ENCODE measurements at regions of chr6 and their contacts with region 1.

Region 1: GRCh38 chr6:3281631-3282475 is 23.1 kb downstream of the PSMG4 start:
- DNase-seq: peak; percentile 25 to 63
- H3K4me3 ChIP-seq: no peak overlapping the region
- H3K27ac ChIP-seq: peak overlapping the region in 1 of 2 donors; percentile 25
- H3K4me1 ChIP-seq: peaks cover 0 to 23% (median 10%) of the 10 kb centered on the region in 4 donors
- H3K27me3 ChIP-seq: no peaks in the 10 kb centered on the region
- CTCF ChIP-seq: no peak

Region 2: GRCh38 chr6:3456755-3457466 is 175.1 kb after region 1 on chr6 and contains the start of gene SLC22A23:
- intact Hi-C with region 1: loop called (anchors 10 kb)
- DNase-seq: peak; percentile 34 to 76
- H3K4me3 ChIP-seq: peak within 1 kb of the TSS; percentile 57 to 71
- H3K27ac ChIP-seq: peak within 1 kb of the TSS; percentile 9 to 53
- H3K4me1 ChIP-seq: peaks cover 0 to 35% (median 22%) of the 10 kb centered on the region in 4 donors
- H3K27me3 ChIP-seq: no peaks in the 10 kb centered on the region
- CTCF ChIP-seq: peak; percentile 56 to 82

Region 3: DNA sequence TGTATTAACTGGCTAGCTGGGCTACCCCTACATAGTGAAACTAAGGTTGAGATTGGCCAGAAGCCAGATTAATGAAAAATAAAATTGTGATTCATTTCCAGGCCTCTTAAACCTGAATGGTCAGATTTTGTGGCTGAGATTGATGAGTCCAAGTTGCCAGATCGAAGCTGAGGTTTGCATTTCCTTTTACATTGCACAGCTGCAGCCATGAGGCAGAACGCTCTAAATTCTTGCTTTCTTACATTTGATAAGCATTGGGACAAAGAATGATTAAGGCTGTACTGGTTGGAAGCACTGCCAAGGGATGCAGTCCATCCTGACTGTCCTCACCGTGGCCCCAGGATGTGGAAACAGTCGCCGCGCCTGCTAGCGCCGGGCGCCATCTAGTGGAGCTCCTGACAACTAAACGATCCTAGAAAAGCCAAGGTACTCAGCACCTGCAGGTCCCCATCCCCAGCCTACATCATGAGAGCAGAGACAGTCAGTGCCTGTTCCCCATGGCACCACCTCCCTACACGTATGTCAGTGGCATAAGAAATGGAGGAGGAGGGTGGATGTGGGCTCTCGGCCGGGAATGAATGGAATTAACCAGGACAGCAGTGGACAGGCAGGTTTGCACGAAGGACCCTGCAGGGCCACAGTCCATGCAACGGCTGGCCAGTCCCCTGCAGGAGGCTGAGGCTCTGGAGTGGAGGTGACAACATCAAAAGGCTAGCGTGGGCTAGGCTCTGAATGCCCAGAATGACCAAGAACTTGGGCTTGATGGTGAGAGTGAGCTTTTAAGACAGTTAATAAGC is 450.7 kb after region 1 on chr6:
- intact Hi-C with region 1: loop called (anchors 2 kb)
- DNase-seq: peak; percentile 73 to 86
- H3K4me3 ChIP-seq: peak overlapping the region in 1 of 2 donors; percentile 3
- H3K27ac ChIP-seq: peak overlapping the region; percentile 62 to 75
- H3K4me1 ChIP-seq: peaks cover 0 to 100% (median 68%) of the 10 kb centered on the region in 4 donors
- H3K27me3 ChIP-seq: no peaks in the 10 kb centered on the region
- CTCF ChIP-seq: peak; percentile 86 to 87

Region 4: GRCh38 chr6:3887150-3887700 is 605.4 kb after region 1 on chr6:
- intact Hi-C with region 1: loop called (anchors 10 kb)
- DNase-seq: peak in 1 of 2 donors; percentile 53
- H3K4me3 ChIP-seq: no peak overlapping the region
- H3K27ac ChIP-seq: peak overlapping the region in 1 of 2 donors; percentile 52
- H3K4me1 ChIP-seq: peaks cover 0 to 58% (median 18%) of the 10 kb centered on the region in 4 donors
- H3K27me3 ChIP-seq: no peaks in the 10 kb centered on the region
- CTCF ChIP-seq: peak; percentile 50 to 52

Region 5: GRCh38 chr6:3990692-3991501 is 709.0 kb after region 1 on chr6:
- intact Hi-C with region 1: loop called (anchors 10 kb)
- DNase-seq: peak; percentile 89 to 94
- H3K4me3 ChIP-seq: peak overlapping the region; percentile 54 to 57
- H3K27ac ChIP-seq: peak overlapping the region; percentile 81 to 82
- H3K4me1 ChIP-seq: peaks cover 0 to 29% (median 16%) of the 10 kb centered on the region in 4 donors
- H3K27me3 ChIP-seq: no peaks in the 10 kb centered on the region
- CTCF ChIP-seq: peak; percentile 81 to 84